ENCODE measurements at regions of chr3 and their contacts with region 1.

Region 1: DNA sequence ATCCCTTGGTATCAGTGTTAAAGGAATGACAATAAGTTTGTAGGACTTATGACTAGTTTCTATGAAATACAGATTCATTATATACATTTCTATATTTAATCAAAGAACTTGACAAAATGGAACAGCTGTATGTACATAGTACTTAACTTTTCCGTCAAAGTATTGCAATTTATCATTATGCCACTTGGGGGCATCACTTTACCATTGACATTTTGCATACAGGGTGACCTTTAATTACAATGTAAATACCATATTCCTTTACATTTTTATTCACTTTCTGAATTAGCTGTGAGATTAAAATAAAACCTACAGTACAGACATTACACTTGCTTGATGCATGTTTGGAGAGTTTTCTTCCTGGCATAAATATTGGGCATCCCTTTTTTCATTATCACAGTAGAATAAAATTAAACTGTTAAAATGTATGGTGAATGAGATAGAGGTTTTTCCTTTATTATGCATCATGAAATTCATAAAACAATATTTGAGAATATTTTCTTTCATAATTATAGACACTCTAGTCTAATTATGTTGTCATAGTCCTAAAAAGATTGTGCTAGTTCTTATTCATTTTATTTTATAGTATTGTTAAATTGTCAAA is 6.9 kb downstream of the NEK11 start:
- DNase-seq: no peak
- ATAC-seq: no peak
- H3K4me3 ChIP-seq: no peak overlapping the region
- H3K27ac ChIP-seq: no peak overlapping the region
- H3K4me1 ChIP-seq: no peaks in the 10 kb centered on the region
- H3K27me3 ChIP-seq: no peaks in the 10 kb centered on the region
- CTCF ChIP-seq: peak; percentile 49 to 73 (median 62)
- POLR2A ChIP-seq: no peak

Region 2: GRCh38 chr3:130997291-130997690 is 36.3 kb before region 1 on chr3:
- intact Hi-C with region 1: no loop called
- DNase-seq: no peak
- ATAC-seq: no peak
- H3K4me3 ChIP-seq: no peak overlapping the region
- H3K27ac ChIP-seq: no peak overlapping the region
- H3K4me1 ChIP-seq: no peaks in the 10 kb centered on the region
- H3K27me3 ChIP-seq: no peaks in the 10 kb centered on the region
- CTCF ChIP-seq: no peak
- POLR2A ChIP-seq: no peak

Region 3: DNA sequence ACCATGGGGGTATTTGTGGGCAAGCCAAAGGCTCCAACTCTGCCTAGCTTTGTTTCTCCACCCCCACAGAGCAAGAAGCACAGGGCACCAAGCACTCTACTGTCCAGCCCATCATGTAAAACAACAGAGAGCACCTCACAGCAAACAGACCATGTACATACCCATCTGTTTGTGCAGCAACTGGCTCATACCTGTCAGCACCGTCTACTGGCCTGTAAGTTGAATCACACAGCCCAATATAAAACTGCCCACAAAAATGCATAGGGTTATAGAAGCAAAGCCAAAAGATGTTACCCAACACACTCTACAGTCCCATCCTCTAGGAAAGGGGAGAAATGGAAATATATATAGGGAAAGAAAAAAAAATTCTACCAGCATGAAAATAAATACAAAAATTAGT is 1140.9 kb after region 1 on chr3:
- intact Hi-C with region 1: loop called in 1 of 10 experiments (anchors 10 kb)
- DNase-seq: no peak
- ATAC-seq: no peak
- H3K4me3 ChIP-seq: no peak overlapping the region
- H3K27ac ChIP-seq: no peak overlapping the region
- H3K4me1 ChIP-seq: no peaks in the 10 kb centered on the region
- H3K27me3 ChIP-seq: peaks cover 0 to 13% (median 0%) of the 10 kb centered on the region in 9 donors
- CTCF ChIP-seq: no peak
- POLR2A ChIP-seq: no peak